ENCODE measurements at regions of chr7 and their contacts with region 1.

Region 1: DNA sequence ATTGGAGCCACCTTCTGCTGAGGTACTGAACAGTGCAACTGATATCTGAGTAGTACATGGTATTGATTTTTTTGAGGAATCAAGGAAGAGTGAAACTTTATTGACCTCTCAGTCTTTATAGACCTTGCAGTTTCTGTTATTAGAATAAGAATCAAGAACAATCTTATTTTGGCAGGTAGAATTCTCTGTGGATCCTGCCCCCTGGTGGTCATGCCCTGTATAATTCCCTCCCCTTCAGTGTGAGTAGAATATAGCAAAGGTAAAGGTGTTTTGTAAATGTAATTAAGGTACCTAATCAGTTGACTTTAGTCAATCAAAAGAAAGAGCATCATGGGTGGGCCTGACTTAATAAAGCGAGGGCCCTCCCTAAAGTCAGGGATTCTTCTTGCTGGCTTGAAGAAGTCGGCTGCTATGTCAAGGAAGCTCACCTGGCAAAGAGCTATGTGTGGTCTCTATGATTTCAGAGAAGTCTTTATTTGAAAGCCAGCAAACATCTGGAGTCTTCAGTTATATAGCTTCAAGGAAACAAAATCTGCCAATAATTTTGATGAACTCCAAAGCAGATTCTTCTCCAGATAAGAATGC is 142.8 kb downstream of the LSM5 start:
- DNase-seq: no peak
- H3K4me3 ChIP-seq: no peak overlapping the region
- H3K27ac ChIP-seq: no peak overlapping the region
- H3K4me1 ChIP-seq: no peaks in the 10 kb centered on the region
- H3K27me3 ChIP-seq: no peaks in the 10 kb centered on the region
- CTCF ChIP-seq: peak; percentile 68

Region 2: GRCh38 chr7:31744294-31744874 is 603.0 kb before region 1 on chr7:
- intact Hi-C with region 1: loop called (anchors 10 kb)
- DNase-seq: peak; percentile 29
- H3K4me3 ChIP-seq: no peak overlapping the region
- H3K27ac ChIP-seq: no peak overlapping the region
- H3K4me1 ChIP-seq: no peaks in the 10 kb centered on the region
- H3K27me3 ChIP-seq: no peaks in the 10 kb centered on the region
- CTCF ChIP-seq: peak; percentile 89

Region 3: GRCh38 chr7:32070406-32071360 is 276.7 kb before region 1 on chr7 and contains the start of gene PDE1C:
- intact Hi-C with region 1: no loop called
- DNase-seq: peak; percentile 80
- H3K4me3 ChIP-seq: peak within 1 kb of the TSS; percentile 73
- H3K27ac ChIP-seq: peak within 1 kb of the TSS; percentile 94
- H3K4me1 ChIP-seq: peaks cover 73% of the 10 kb centered on the region
- H3K27me3 ChIP-seq: peaks cover 15% of the 10 kb centered on the region
- CTCF ChIP-seq: no peak
- total RNA-seq, gene PDE1C: 207 TPM

Region 4: DNA sequence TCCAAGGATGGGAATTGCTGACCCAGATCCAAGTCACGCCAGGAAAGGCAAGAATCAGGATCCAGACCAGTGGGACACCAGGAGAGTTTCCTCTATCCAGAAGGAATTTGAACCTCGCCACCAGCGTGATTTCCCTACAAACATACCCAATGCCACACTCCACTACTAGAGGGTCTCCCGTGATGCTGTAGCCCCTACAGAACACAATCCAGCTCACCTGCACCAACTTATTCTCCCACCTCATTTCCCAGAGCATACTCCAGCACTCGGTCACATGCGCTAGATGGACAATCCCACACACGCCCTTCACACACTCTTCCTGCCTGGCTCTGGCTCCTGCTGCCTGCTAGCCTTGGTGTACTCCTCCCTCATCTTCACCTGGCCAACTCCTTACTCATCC is 135.0 kb before region 1 on chr7:
- intact Hi-C with region 1: loop called (anchors 5 kb)
- DNase-seq: no peak
- H3K4me3 ChIP-seq: no peak overlapping the region
- H3K27ac ChIP-seq: no peak overlapping the region
- H3K4me1 ChIP-seq: no peaks in the 10 kb centered on the region
- H3K27me3 ChIP-seq: peaks cover 26% of the 10 kb centered on the region
- CTCF ChIP-seq: no peak

Region 5: DNA sequence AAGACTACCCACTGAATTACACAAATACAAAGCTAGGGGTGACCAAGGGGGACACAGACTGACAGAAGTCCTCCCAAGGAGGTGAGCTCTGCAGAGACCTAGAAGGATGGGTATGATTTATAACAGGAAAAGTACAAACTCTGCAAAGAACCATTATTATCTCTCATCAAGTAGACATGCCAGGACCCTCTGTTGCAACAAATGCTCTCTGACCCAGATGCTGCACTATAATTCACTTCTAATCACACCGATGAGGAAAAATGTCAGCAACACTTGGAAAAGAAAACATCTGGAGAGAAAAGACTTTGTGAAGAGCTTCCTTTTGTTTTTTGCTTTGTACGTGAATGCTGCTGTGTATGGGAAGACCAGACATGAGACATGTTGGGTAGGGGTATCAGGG is 98.8 kb before region 1 on chr7:
- intact Hi-C with region 1: no loop called
- DNase-seq: no peak
- H3K4me3 ChIP-seq: no peak overlapping the region
- H3K27ac ChIP-seq: peak overlapping the region; percentile 20
- H3K4me1 ChIP-seq: peaks cover 16% of the 10 kb centered on the region
- H3K27me3 ChIP-seq: peaks cover 20% of the 10 kb centered on the region
- CTCF ChIP-seq: no peak

Region 6: GRCh38 chr7:33221387-33221786 is 874.1 kb after region 1 on chr7:
- intact Hi-C with region 1: no loop called
- DNase-seq: no peak
- H3K4me3 ChIP-seq: no peak overlapping the region
- H3K27ac ChIP-seq: no peak overlapping the region
- H3K4me1 ChIP-seq: no peaks in the 10 kb centered on the region
- H3K27me3 ChIP-seq: no peaks in the 10 kb centered on the region
- CTCF ChIP-seq: no peak